HEK293T (cell line): ENCODE measurements at regions of chr17 and their contacts with region 1.

Region 1: GRCh38 chr17:58658804-58659713 is 32.8 kb downstream of the TEX14 start:
- DNase-seq: peak; percentile 87

Region 2: DNA sequence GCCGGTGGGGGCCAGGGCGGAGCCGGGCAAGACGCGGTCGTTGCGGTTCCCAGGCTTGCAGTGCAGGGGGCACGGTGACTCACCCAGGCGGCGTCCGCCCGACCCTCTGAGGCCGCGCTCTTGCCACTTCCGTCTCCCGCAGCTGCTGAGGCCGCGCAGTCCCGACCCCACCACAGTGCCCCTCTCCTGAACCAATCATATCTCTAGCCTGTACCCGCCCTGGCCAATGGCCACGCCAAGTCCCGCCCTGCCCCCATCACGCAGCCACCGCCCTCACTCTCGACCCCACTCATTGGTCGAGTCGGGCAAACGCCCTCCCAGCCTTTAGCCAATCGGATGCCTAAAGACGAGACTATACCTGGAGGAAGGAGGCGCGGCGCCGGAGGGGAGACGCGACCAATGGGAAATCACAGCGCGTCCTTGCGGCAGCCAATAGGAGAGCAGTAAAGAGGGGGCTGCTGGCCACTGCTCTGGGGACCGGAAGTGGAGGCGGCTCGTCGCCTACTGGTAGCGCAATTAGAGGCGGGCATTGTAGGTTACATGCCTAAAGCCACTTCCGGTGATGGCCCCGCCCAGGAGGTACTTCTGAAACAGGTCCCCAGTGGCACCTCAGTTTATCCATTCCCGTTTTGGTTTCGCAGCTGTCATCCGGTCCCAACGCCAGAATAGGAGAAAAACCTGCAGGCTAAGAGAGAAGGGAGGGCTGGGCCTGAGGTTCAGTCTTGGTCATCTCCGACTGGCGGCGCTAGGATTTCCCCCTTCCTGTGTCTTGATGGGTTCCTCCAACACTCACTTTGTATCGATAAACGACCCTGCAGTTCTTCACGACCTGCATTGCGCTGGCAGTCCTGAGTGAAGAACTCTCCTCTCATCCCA is 141.1 kb before region 1 on chr17:
- CTCF ChIA-PET with region 1: interaction called, 4 read pairs
- POLR2A ChIA-PET with region 1: interaction called, 10 read pairs
- DNase-seq: peak; percentile 95

Region 3: GRCh38 chr17:58577642-58578091 is 81.4 kb before region 1 on chr17:
- CTCF ChIA-PET with region 1: no interaction called
- POLR2A ChIA-PET with region 1: no interaction called
- DNase-seq: peak; percentile 65

Region 4: DNA sequence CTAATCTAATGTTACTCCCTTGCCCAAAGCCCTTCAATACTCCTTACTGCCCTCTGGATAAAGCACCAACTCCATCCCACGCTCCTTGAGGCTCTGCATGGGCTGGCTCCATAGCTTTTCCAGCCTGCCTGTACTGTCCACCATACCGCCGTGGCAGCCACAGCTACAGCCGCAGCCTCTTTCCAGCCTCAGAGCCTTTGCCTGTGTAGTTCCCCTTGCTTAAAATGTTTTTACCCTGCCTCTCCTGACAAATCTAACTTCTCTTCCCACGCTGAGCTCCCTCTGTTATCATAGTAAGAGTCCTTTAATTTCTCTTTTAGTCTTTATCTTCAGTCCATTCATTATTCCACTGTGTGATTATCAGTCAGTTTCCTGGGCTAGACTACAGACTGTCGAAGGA is 10.8 kb after region 1 on chr17:
- CTCF ChIA-PET with region 1: no interaction called
- POLR2A ChIA-PET with region 1: interaction called, 19 read pairs
- DNase-seq: no peak

Region 5: DNA sequence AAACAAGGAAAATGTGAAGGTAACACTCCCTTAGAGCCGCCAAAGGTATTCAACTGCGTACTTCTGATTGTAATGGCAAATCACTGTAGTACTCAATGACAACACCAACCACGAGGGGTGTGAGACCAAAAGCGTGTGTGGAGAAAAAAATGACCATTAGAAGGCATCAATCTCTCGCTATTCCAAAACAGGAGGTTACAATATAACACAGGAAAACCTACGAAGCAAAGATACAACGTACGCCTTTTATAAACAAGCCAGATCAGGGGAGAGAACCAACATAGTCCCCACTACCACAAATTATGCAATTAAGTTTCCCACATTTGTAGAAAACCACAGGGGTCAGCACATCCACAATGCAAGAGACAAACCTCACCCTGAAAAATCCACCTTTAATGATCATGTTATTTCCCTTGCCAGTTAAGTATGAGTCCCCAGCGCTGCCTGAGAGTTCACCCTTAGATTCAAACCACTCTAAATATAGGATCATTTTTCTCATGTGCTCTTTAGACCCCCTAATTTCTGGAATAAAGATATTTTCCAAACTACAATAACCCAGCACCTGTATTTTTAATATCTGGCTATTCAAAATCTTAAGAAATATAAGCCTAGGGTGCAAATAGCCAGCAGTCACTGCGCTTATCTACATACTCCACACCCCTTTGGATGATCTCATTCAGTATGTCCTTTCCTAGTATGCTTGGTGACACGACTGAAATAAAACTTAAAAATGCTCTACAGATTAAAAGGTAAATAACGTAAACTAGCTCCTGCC is 20.4 kb after region 1 on chr17:
- CTCF ChIA-PET with region 1: no interaction called
- POLR2A ChIA-PET with region 1: interaction called, 17 read pairs
- DNase-seq: peak; percentile 71

Region 6: GRCh38 chr17:58692239-58693055 is 33.4 kb after region 1 on chr17 and contains the start of gene RAD51C:
- CTCF ChIA-PET with region 1: no interaction called
- POLR2A ChIA-PET with region 1: interaction called, 17 read pairs
- DNase-seq: peak; percentile 88